IMR-90 (cell line): ENCODE measurements at regions of chr1 and their contacts with region 1.

Region 1: GRCh38 chr1:177256153-177257075 is 85.7 kb downstream of the BRINP2 start:
- DNase-seq: peak; percentile 81
- ATAC-seq: peak; percentile 85
- H3K4me3 ChIP-seq: no peak overlapping the region
- H3K27ac ChIP-seq: no peak overlapping the region
- H3K4me1 ChIP-seq: peaks cover 3% of the 10 kb centered on the region
- H3K27me3 ChIP-seq: no peaks in the 10 kb centered on the region; the same call in 1 of the 2 replicates
- CTCF ChIP-seq: peak; percentile 39
- POLR2A ChIP-seq: no peak
- RAD21 ChIP-seq: no peak

Region 2: DNA sequence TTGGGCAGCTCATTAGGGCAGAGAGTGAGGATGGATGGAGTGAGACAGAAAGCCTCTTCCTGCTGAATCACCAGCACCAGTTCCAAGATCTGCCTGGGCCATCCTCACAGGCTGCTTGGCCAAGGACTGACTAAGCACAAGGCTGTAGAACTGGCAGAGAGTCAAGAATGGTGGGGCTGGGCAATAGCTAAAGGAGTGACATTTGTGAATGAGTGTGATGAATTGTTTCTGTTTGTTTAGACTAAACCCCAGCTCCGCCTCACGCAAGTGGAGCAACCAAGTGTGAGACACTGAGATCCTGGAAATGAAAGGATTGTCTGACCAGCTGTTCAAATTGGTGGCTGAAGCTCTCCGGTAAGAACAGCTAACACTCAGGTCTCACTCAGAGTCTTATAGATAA is 47.1 kb before region 1 on chr1:
- CTCF ChIA-PET with region 1: interaction called, 3 read pairs
- POLR2A ChIA-PET with region 1: no interaction called
- dilution Hi-C with region 1: no loop called
- in situ Hi-C with region 1: no loop called
- intact Hi-C with region 1: loop called (anchors 5 kb)
- DNase-seq: peak; percentile 100
- ATAC-seq: peak; percentile 97
- H3K4me3 ChIP-seq: no peak overlapping the region
- H3K27ac ChIP-seq: no peak overlapping the region
- H3K4me1 ChIP-seq: peaks cover 6% of the 10 kb centered on the region
- H3K27me3 ChIP-seq: no peaks in the 10 kb centered on the region
- CTCF ChIP-seq: no peak
- POLR2A ChIP-seq: no peak
- RAD21 ChIP-seq: no peak